CD4-positive, alpha-beta T cell (primary cell): ENCODE measurements at regions of chr2 and their contacts with region 1.

Region 1: GRCh38 chr2:3379647-3380534 is at the start of gene TRAPPC12:
- DNase-seq: peak; percentile 88 to 95 (median 92)
- ATAC-seq: peak; percentile 78
- H3K4me3 ChIP-seq: peak within 1 kb of the TSS; percentile 91
- H3K4me3 Mint-ChIP-seq: peak within 1 kb of the TSS; percentile 97
- H3K27ac ChIP-seq: peak within 1 kb of the TSS; percentile 85 to 94
- H3K27ac Mint-ChIP-seq: peak within 1 kb of the TSS; percentile 98
- H3K4me1 ChIP-seq: peaks cover 42% of the 10 kb centered on the region
- H3K4me1 Mint-ChIP-seq: peaks cover 70% of the 10 kb centered on the region
- H3K27me3 ChIP-seq: no peaks in the 10 kb centered on the region
- H3K27me3 Mint-ChIP-seq: no peaks in the 10 kb centered on the region
- CTCF ChIP-seq: peak; percentile 41
- total RNA-seq, gene TRAPPC12: 49.8 to 64.0 TPM

Region 2: DNA sequence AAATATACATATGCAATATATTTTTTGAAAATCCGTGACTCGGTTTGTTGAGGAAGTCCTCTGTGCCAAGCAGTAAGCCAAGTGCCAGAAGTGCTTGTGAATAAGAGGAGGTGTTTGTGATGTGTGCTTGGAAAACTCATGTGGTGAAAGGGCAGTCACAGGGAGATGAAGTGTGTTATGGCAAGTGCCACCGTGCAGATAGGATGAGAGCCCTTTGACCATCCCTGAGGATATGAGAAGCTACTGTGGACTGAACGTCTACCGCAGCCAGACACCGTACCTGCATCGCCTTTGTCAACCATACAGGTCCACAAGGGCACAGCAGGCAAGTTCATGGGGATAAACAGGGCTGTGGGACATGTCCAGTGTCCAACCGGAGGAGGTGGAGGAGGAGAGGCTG is 759.9 kb before region 1 on chr2:
- CTCF ChIA-PET with region 1: no interaction called
- POLR2A ChIA-PET with region 1: no interaction called
- intact Hi-C with region 1: loop called in 1 of 2 experiments (anchors 5 kb)
- DNase-seq: no peak
- ATAC-seq: no peak
- H3K4me3 ChIP-seq: no peak overlapping the region
- H3K4me3 Mint-ChIP-seq: no peak overlapping the region
- H3K27ac ChIP-seq: no peak overlapping the region
- H3K27ac Mint-ChIP-seq: no peak overlapping the region
- H3K4me1 ChIP-seq: no peaks in the 10 kb centered on the region
- H3K4me1 Mint-ChIP-seq: no peaks in the 10 kb centered on the region
- H3K27me3 ChIP-seq: peaks cover 0 to 6% of the 10 kb centered on the region in 2 experiments
- H3K27me3 Mint-ChIP-seq: peaks cover 9% of the 10 kb centered on the region
- CTCF ChIP-seq: no peak

Region 3: GRCh38 chr2:3242747-3243369 is 137.0 kb before region 1 on chr2:
- CTCF ChIA-PET with region 1: no interaction called
- POLR2A ChIA-PET with region 1: no interaction called
- intact Hi-C with region 1: loop called in 1 of 2 experiments (anchors 10 kb)
- DNase-seq: peak in 12 of 14 experiments; percentile 9 to 84 (median 32)
- ATAC-seq: peak; percentile 89
- H3K4me3 ChIP-seq: peak overlapping the region; percentile 14
- H3K4me3 Mint-ChIP-seq: peak overlapping the region; percentile 78
- H3K27ac ChIP-seq: peak overlapping the region; percentile 47 to 64
- H3K27ac Mint-ChIP-seq: no peak overlapping the region
- H3K4me1 ChIP-seq: peaks cover 52% of the 10 kb centered on the region
- H3K4me1 Mint-ChIP-seq: peaks cover 13% of the 10 kb centered on the region
- H3K27me3 ChIP-seq: no peaks in the 10 kb centered on the region
- H3K27me3 Mint-ChIP-seq: no peaks in the 10 kb centered on the region
- CTCF ChIP-seq: no peak

Region 4: DNA sequence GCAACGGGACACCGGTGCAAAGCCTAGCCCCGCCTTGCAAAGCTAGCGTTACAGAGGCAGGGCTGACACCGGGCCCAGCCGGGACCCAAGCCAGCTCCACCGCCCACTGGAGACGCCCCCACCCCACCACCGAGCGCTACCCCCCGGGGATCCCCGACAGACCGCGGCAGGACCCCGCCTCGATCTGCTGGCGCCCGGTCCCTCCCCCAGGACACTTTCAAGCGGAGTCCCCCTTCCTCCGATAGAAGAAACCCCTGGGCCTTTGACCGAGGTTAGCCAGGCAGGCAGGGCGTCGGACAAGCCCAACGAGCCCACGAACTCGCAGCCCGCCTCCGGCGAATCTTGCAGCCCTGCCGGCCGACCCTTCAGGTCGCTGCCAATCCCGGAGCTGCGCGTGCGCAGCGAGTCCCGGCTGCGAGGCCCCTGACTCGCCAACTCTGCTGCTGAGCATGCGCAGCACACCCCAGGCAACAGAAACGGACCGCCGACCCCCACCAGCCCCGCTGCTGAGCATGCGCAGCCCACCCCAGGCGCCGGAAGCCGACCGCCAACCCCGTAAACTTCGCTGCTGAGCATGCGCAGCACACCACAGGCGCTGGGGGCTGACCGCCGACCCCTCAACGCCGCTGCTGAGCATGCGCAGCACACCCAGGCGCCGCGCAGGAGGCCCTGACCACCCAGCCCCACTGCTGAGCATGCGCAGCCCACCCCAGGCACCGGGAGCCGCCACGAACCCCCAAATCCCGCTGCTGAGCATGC is 138.8 kb after region 1 on chr2:
- CTCF ChIA-PET with region 1: no interaction called
- POLR2A ChIA-PET with region 1: interaction called, 6 read pairs
- intact Hi-C with region 1: loop called in 1 of 2 experiments (anchors 2 kb)
- DNase-seq: peak; percentile 94 to 99 (median 98)
- ATAC-seq: peak; percentile 65
- H3K4me3 ChIP-seq: peak overlapping the region; percentile 87
- H3K4me3 Mint-ChIP-seq: peak overlapping the region; percentile 94
- H3K27ac ChIP-seq: peak overlapping the region; percentile 76 to 96
- H3K27ac Mint-ChIP-seq: peak overlapping the region; percentile 88
- H3K4me1 ChIP-seq: peaks cover 24% of the 10 kb centered on the region
- H3K4me1 Mint-ChIP-seq: peaks cover 46% of the 10 kb centered on the region
- H3K27me3 ChIP-seq: no peaks in the 10 kb centered on the region
- H3K27me3 Mint-ChIP-seq: no peaks in the 10 kb centered on the region
- CTCF ChIP-seq: no peak

Region 5: DNA sequence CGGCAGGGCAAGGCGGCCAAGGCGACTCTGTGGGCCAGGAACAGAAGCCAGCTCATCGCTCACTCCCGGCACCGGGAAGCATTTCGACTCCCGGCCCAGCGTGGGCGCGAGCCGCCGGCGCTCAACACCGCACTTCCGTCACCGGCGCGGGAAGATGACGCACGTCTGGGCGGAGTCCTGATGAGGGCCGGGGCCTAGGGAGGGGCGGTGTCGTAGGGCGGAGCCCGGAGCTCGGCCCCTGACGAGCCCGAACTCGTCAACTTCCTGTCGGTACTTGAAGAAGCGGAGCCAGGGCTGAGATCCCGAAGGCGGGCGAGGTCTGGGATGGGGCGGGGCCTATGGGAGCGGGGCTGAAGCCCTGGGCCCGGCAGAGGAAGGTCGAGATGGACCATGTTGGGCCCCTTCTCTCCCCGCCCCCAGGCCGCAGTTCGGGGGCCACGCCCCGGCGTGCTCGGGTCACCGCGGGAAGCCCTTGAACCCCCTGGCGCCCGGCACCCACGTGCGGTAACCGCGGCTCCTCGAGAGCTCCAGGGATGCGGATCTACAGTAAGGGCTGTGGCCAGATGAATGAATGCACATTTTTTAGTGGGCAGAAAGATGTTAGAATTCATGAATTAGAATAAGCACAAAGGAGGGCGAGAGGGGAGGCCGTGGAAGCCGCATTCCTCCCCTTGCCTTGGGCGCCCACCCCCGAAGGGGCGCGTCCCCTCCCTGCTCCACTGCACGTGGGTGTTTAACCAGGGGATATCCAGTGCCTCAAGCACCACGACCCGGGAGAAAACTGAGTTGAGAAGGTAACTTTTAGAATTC is 178.5 kb after region 1 on chr2 and contains the start of gene RNASEH1:
- CTCF ChIA-PET with region 1: no interaction called
- POLR2A ChIA-PET with region 1: interaction called, 30 read pairs
- intact Hi-C with region 1: loop called (anchors 2 to 5 kb)
- DNase-seq: peak; percentile 95 to 99 (median 98)
- ATAC-seq: peak; percentile 96
- H3K4me3 ChIP-seq: peak within 1 kb of the TSS; percentile 83
- H3K4me3 Mint-ChIP-seq: peak within 1 kb of the TSS; percentile 96
- H3K27ac ChIP-seq: peak within 1 kb of the TSS; percentile 92 to 93
- H3K27ac Mint-ChIP-seq: peak within 1 kb of the TSS; percentile 96
- H3K4me1 ChIP-seq: peaks cover 22% of the 10 kb centered on the region
- H3K4me1 Mint-ChIP-seq: peaks cover 47% of the 10 kb centered on the region
- H3K27me3 ChIP-seq: no peaks in the 10 kb centered on the region
- H3K27me3 Mint-ChIP-seq: no peaks in the 10 kb centered on the region
- CTCF ChIP-seq: no peak
- total RNA-seq, gene RNASEH1: 31.5 to 31.9 TPM

Region 6: DNA sequence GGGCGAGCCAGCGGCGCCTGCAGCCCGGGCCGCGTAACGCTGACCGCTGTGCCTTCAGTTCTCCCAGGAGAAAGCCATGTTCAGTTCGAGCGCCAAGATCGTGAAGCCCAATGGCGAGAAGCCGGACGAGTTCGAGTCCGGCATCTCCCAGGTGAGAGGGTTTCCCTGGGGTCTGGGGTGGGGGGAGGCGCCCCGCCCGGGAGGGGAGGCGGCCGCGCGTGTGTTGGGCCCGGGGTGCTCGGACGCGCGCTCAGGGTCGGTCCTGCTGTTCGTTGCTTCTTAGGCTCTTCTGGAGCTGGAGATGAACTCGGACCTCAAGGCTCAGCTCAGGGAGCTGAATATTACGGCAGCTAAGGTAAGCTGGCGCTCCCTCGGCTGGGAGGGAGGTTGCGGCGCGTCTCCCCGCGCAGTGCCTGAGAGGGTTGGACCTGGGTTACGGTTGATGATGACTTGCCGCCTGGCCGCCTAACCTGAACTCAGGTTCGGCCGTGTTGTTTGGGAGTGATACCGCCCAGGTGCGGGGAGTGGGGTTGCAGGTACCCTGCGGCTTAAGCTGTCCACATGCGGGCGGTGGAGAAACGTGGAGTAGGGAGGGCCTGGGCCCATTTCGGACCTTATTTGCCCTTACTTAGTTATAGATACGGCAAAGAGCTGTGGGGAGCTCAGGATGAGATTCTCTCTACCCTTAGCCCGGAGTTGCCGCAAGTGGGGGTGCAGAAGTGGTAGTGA is 195.8 kb after region 1 on chr2:
- CTCF ChIA-PET with region 1: no interaction called
- POLR2A ChIA-PET with region 1: interaction called, 4 read pairs
- intact Hi-C with region 1: loop called (anchors 2 kb)
- DNase-seq: peak in 10 of 14 experiments; percentile 18 to 66 (median 30)
- ATAC-seq: peak; percentile 43
- H3K4me3 ChIP-seq: peak overlapping the region; percentile 70
- H3K4me3 Mint-ChIP-seq: peak overlapping the region; percentile 89
- H3K27ac ChIP-seq: peak overlapping the region; percentile 76 to 89
- H3K27ac Mint-ChIP-seq: peak overlapping the region; percentile 93
- H3K4me1 ChIP-seq: peaks cover 28% of the 10 kb centered on the region
- H3K4me1 Mint-ChIP-seq: peaks cover 46% of the 10 kb centered on the region
- H3K27me3 ChIP-seq: no peaks in the 10 kb centered on the region
- H3K27me3 Mint-ChIP-seq: no peaks in the 10 kb centered on the region
- CTCF ChIP-seq: no peak